CD4-positive, alpha-beta T cell (primary cell): ENCODE measurements at regions of chr7 and their contacts with region 1.

Region 1: DNA sequence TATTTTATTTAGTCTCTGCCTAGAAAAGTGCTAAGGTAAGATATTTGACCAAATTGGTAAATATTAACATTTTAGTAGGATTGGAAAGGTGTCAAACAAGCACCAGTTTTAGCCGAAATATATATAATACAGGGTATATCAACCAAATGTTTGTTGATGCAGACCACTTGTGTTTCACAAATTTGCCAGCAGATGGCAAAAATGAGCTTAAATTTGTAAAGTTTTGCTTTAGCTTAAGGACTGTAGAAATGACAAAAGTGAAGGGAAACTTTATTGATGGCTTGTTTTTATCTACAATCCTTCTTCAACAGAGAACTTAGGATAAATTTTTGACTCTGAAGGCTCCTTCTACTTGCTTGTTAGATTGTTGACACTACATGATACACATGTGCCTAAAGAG is 4.8 kb upstream of the POLR1F start:
- DNase-seq: peak in 13 of 14 experiments; percentile 3 to 74 (median 29)
- ATAC-seq: no peak
- H3K4me3 ChIP-seq: no peak overlapping the region
- H3K4me3 Mint-ChIP-seq: no peak overlapping the region
- H3K27ac ChIP-seq: no peak overlapping the region
- H3K27ac Mint-ChIP-seq: no peak overlapping the region
- H3K4me1 ChIP-seq: peaks cover 7% of the 10 kb centered on the region
- H3K4me1 Mint-ChIP-seq: peaks cover 17% of the 10 kb centered on the region
- H3K27me3 ChIP-seq: no peaks in the 10 kb centered on the region
- H3K27me3 Mint-ChIP-seq: no peaks in the 10 kb centered on the region
- CTCF ChIP-seq: peak; percentile 44

Region 2: GRCh38 chr7:19834566-19834965 is 120.9 kb after region 1 on chr7:
- CTCF ChIA-PET with region 1: no interaction called
- POLR2A ChIA-PET with region 1: no interaction called
- intact Hi-C with region 1: no loop called
- DNase-seq: no peak
- ATAC-seq: no peak
- H3K4me3 ChIP-seq: no peak overlapping the region
- H3K4me3 Mint-ChIP-seq: no peak overlapping the region
- H3K27ac ChIP-seq: no peak overlapping the region
- H3K27ac Mint-ChIP-seq: no peak overlapping the region
- H3K4me1 ChIP-seq: no peaks in the 10 kb centered on the region
- H3K4me1 Mint-ChIP-seq: no peaks in the 10 kb centered on the region
- H3K27me3 ChIP-seq: no peaks in the 10 kb centered on the region
- H3K27me3 Mint-ChIP-seq: no peaks in the 10 kb centered on the region
- CTCF ChIP-seq: no peak

Region 3: DNA sequence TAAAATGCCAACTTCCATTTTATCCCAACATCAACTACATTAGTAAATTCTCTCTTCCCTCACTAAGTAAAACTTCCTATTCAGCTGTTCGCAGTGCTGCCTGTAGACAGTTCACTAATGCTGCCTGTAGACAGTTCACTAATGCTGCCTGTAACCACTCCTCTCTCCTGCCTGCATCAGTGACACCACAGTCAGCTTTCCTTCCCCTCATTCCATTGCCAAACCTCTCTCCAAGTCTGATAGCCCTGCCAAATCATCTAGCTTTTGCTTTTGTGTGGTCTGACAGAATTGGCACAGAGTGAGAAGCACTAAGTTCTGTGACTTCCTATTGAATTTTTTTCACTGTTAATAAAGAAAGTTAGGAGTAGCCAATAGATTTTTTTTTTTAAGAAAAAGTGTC is 546.5 kb after region 1 on chr7:
- CTCF ChIA-PET with region 1: no interaction called
- POLR2A ChIA-PET with region 1: no interaction called
- intact Hi-C with region 1: no loop called
- DNase-seq: no peak
- ATAC-seq: no peak
- H3K4me3 ChIP-seq: no peak overlapping the region
- H3K4me3 Mint-ChIP-seq: no peak overlapping the region
- H3K27ac ChIP-seq: no peak overlapping the region
- H3K27ac Mint-ChIP-seq: no peak overlapping the region
- H3K4me1 ChIP-seq: no peaks in the 10 kb centered on the region
- H3K4me1 Mint-ChIP-seq: no peaks in the 10 kb centered on the region
- H3K27me3 ChIP-seq: no peaks in the 10 kb centered on the region
- H3K27me3 Mint-ChIP-seq: no peaks in the 10 kb centered on the region
- CTCF ChIP-seq: no peak

Region 4: DNA sequence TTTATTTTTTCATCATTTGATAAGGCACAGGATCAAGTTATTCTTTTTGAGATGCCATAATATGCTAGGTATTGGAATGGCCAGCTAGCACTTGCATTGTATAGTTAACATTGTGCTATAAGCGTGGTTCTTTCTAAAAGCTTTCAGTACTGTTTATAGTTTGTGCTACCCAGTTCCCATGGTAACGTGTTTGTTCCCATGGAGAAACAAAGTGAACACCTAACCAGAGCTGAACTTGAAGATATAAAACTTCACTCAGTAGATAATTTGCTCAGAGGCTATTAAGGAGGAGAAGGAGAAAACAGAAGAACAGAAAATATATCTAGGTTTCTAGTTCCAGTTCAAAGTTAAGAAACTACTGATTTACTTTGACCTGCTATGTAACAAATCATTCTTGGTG is 593.4 kb after region 1 on chr7:
- CTCF ChIA-PET with region 1: no interaction called
- POLR2A ChIA-PET with region 1: no interaction called
- intact Hi-C with region 1: loop called in 1 of 2 experiments (anchors 5 kb)
- DNase-seq: no peak
- ATAC-seq: no peak
- H3K4me3 ChIP-seq: no peak overlapping the region
- H3K4me3 Mint-ChIP-seq: no peak overlapping the region
- H3K27ac ChIP-seq: no peak overlapping the region
- H3K27ac Mint-ChIP-seq: no peak overlapping the region
- H3K4me1 ChIP-seq: no peaks in the 10 kb centered on the region
- H3K4me1 Mint-ChIP-seq: no peaks in the 10 kb centered on the region
- H3K27me3 ChIP-seq: no peaks in the 10 kb centered on the region
- H3K27me3 Mint-ChIP-seq: no peaks in the 10 kb centered on the region
- CTCF ChIP-seq: no peak

Region 5: GRCh38 chr7:20598459-20599309 is 885.0 kb after region 1 on chr7:
- CTCF ChIA-PET with region 1: interaction called, 18 read pairs
- POLR2A ChIA-PET with region 1: interaction called, 6 read pairs
- intact Hi-C with region 1: loop called (anchors 1 to 2 kb)
- DNase-seq: peak in 3 of 14 experiments; percentile 49 to 67 (median 64)
- ATAC-seq: no peak
- H3K4me3 ChIP-seq: no peak overlapping the region
- H3K4me3 Mint-ChIP-seq: no peak overlapping the region
- H3K27ac ChIP-seq: no peak overlapping the region
- H3K27ac Mint-ChIP-seq: no peak overlapping the region
- H3K4me1 ChIP-seq: peaks cover 2% of the 10 kb centered on the region
- H3K4me1 Mint-ChIP-seq: no peaks in the 10 kb centered on the region
- H3K27me3 ChIP-seq: peaks cover 0 to 2% of the 10 kb centered on the region in 2 experiments
- H3K27me3 Mint-ChIP-seq: peaks cover 20% of the 10 kb centered on the region
- CTCF ChIP-seq: peak; percentile 61